Heart left ventricle (tissue), 16 donors: ENCODE measurements at regions of chr13 and their contacts with region 1.

Region 1: GRCh38 chr13:86830046-86830445 is 841.1 kb upstream of the SLITRK5 start:
- DNase-seq: no peak
- ATAC-seq: no peak
- H3K4me3 ChIP-seq: no peak overlapping the region
- H3K27ac ChIP-seq: no peak overlapping the region
- H3K4me1 ChIP-seq: no peaks in the 10 kb centered on the region
- H3K27me3 ChIP-seq: no peaks in the 10 kb centered on the region
- CTCF ChIP-seq: no peak
- POLR2A ChIP-seq: no peak

Region 2: GRCh38 chr13:86765462-86765861 is 64.6 kb before region 1 on chr13:
- intact Hi-C with region 1: no loop called
- DNase-seq: no peak
- ATAC-seq: no peak
- H3K4me3 ChIP-seq: no peak overlapping the region
- H3K27ac ChIP-seq: no peak overlapping the region
- H3K4me1 ChIP-seq: no peaks in the 10 kb centered on the region
- H3K27me3 ChIP-seq: no peaks in the 10 kb centered on the region
- CTCF ChIP-seq: no peak
- POLR2A ChIP-seq: no peak

Region 3: DNA sequence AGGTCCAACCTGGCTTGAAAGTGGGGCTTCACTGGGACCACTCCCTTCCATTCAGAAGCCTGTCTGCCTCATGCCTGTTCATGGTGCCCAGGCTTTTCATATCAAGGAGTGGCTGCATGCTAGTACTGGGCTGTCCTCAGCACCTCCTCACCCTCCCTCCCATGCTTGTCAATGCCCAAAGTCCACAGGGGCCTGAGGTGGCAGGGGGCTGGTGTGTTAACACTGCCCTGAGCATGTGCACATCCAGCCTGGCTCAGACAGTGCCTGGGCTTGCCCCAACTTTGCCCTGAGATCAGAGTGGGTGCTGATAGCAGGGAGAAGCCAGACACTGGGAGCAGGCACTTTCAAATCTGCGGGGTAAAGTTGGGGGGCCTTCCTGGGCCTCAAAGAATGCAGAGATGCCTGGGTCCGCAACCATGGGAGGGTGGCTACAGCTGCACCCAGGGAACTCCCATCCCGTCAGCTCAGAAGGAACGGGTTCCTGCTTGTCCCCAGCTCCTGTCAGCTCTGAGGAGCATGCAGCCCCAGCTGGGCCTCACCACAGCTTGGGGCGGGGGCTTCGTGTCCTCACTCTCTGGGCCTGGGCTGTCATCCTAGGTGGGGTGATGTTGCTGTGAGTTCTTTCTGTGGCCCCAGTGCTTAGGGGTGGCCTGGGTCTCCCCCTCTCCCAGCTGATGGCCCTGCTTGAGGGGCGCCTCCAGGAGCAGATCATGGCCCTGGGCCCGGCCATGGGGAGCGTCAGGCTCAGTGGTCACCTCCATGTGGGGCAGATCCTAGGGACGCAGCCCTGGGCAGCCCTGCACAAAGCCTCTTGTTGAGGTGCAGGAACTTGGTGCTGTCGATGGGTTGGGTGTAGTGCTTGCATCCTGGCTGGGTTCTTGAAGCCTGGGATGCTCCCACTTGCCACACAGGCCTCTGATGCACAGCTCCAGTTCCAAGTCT is 10.5 kb after region 1 on chr13:
- intact Hi-C with region 1: loop called in 1 of 10 experiments (anchors 1 kb)
- DNase-seq: no peak
- ATAC-seq: peak in 1 of 4 donors; percentile 36
- H3K4me3 ChIP-seq: no peak overlapping the region
- H3K27ac ChIP-seq: no peak overlapping the region
- H3K4me1 ChIP-seq: no peaks in the 10 kb centered on the region
- H3K27me3 ChIP-seq: no peaks in the 10 kb centered on the region
- CTCF ChIP-seq: no peak
- POLR2A ChIP-seq: no peak